GM10248 (cell line): ENCODE measurements at regions of chr22 and their contacts with region 1.

Region 1: GRCh38 chr22:41822317-41823060 is 10.4 kb upstream of the SREBF2 start:
- DNase-seq: peak; percentile 69
- CTCF ChIP-seq: peak; percentile 55

Region 2: GRCh38 chr22:41274856-41275255 is 547.6 kb before region 1 on chr22:
- CTCF ChIA-PET with region 1: no interaction called
- POLR2A ChIA-PET with region 1: no interaction called
- DNase-seq: no peak
- CTCF ChIP-seq: no peak

Region 3: DNA sequence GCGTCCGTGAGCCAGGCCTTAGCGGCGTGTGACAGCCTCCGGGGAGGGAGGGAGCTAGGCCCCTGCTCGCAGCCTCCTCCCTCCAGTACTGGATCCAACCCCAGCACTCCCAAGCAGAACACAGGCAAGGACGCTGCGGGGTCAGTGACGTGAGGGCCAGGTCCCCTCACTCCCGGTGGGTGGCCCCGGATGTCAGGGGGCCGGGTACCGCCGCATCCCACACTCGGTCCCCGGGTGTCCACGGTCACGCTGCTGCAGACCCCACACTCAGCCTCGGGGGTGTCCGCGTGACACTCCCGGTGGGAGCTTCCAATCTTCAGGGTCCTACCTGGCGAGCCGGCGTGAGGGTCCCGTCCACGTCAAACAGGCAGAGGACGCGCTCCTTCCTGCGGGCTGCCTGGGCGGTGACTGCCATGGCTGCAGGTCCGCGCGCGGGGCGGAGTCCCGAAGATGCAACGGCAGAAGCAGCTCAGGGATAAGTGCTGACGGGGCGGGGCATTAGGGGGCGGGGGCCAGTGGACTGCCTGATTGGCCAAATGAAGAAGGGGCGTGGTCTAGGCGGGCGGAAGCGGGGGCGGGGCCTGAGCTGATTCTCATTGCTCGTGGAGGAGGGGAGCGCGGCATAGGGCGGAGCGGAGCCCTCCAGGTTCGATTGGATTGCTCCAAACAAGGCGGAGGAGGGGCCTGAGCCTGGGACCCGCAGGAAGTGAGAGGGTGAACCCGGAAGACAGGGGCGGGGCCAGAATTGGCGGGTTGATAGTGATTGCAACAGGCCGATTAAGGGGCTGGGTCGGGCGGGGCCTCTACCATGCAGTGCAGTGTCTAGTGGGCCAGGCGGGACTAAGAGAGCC is 232.9 kb before region 1 on chr22 and contains the start of gene PMM1:
- CTCF ChIA-PET with region 1: no interaction called
- POLR2A ChIA-PET with region 1: no interaction called
- DNase-seq: peak; percentile 99
- CTCF ChIP-seq: no peak

Region 4: DNA sequence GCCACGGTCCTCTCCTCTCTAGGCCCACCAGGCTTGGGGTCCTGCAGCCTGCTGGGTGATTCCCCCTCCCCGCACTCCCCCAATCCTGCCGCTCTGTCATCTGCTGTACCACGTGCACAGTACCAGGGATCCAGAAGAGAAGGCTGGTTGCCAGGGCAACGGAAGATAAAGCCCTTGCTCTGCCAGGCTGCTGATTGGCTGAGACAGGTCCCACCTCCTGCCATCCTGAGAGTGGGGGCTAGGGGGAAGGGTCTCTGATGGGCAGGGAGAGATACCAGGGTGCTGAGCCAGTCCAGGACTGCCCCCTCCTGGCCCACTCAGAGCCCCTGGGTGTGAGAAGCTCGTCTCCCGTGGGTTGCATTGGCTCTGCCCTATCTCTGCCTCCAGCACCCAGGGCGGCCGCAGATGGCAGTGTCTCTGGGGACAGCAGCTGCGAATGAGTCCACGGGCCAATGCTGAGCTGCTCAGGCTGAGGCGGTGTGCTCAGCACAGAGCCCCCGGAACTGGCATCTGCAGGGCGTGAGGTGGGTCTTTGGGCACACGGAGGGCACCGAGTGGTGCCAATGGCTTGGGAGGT is 129.5 kb after region 1 on chr22 and contains the start of gene SMIM45:
- CTCF ChIA-PET with region 1: interaction called, 10 read pairs
- POLR2A ChIA-PET with region 1: interaction called, 9 read pairs
- DNase-seq: no peak
- CTCF ChIP-seq: no peak